ENCODE measurements at regions of chr20 and their contacts with region 1.

Region 1: GRCh38 chr20:62121776-62122631 is at the start of gene LSM14B:
- DNase-seq: peak; percentile 99
- CTCF ChIP-seq: no peak

Region 2: DNA sequence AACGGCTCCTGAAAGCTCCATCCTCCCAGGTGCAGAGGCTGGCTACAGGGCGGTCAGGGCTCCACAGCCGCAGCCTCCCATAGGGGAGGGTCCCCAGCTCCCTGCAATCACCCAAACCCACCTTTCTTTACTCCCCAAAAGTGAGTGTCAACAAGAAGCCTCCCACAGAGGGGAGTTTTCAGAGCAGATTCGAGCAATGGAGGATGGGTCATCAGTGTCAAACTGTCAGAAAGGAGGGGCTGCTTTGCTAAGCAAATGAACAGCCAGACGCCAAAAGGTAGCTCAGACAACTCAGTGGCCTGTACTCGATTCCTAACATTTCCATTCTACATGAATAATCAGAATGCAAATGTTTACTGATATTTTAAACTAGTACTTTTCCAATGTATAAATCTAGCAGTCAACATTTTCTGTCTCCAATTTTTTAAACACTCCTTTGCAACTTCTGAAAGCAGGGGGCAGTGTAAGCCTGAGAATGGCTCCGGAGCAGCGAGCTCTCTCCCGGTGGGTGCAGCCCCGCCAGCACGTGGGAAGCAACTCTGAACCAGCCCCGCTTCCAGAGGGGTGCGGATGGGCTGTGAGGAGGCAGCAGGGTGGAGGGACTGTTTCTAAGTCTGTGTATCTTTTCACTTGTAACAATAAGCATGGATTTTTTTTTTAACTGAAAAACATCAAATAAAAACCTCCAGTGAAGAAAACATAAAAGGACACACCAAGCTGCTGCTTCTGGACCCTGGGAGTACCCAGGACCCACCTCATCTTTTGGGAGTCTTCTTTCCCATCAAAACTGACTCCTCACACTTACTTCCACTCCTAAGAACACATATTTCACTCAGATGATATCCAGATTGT is 111.2 kb before region 1 on chr20:
- CTCF ChIA-PET with region 1: interaction called, 19 read pairs
- POLR2A ChIA-PET with region 1: no interaction called
- DNase-seq: peak; percentile 80
- CTCF ChIP-seq: peak; percentile 67

Region 3: DNA sequence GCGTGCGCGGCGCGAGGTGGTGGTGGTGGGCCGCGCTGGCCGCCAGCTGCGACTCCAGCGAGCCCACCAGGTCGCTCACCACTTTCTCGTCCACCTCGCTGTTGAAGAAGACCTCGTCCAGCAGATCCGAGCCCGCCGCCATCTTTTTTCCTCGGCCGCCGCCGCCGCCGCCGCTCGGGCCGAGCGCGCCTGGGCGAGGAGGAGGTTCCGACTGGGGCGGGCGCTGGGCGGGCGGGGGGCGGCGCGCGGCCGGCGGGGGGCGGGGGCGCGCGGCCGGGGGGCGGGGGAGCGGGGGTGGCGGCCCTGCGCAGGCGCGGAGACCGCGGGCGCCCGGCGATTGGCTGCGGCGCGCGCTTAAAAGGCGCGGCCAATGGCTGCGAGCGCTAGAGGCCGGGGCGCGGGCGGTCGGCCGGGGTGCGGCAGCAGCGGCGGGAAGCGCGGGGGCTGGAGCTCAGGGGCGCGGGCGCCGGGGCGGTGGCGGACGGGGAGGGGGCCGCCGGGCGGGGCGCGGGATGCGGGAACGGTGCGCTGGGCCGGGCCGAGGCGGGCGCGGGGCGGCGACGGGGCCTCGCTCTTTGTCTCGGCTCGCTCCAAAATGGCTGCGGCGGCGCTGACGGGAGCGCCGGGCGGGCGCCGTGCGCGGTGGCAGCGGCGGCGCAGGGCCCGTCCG is 56.2 kb before region 1 on chr20 and contains the start of gene TAF4:
- CTCF ChIA-PET with region 1: no interaction called
- POLR2A ChIA-PET with region 1: interaction called, 36 read pairs
- DNase-seq: peak; percentile 99
- CTCF ChIP-seq: no peak

Region 4: GRCh38 chr20:62079166-62079565 is 42.8 kb before region 1 on chr20:
- CTCF ChIA-PET with region 1: no interaction called
- POLR2A ChIA-PET with region 1: no interaction called
- DNase-seq: no peak
- CTCF ChIP-seq: no peak

Region 5: GRCh38 chr20:62136283-62137091 is 14.5 kb after region 1 on chr20:
- CTCF ChIA-PET with region 1: interaction called, 16 read pairs
- POLR2A ChIA-PET with region 1: interaction called, 5 read pairs
- DNase-seq: peak; percentile 64
- CTCF ChIP-seq: peak; percentile 94

Region 6: DNA sequence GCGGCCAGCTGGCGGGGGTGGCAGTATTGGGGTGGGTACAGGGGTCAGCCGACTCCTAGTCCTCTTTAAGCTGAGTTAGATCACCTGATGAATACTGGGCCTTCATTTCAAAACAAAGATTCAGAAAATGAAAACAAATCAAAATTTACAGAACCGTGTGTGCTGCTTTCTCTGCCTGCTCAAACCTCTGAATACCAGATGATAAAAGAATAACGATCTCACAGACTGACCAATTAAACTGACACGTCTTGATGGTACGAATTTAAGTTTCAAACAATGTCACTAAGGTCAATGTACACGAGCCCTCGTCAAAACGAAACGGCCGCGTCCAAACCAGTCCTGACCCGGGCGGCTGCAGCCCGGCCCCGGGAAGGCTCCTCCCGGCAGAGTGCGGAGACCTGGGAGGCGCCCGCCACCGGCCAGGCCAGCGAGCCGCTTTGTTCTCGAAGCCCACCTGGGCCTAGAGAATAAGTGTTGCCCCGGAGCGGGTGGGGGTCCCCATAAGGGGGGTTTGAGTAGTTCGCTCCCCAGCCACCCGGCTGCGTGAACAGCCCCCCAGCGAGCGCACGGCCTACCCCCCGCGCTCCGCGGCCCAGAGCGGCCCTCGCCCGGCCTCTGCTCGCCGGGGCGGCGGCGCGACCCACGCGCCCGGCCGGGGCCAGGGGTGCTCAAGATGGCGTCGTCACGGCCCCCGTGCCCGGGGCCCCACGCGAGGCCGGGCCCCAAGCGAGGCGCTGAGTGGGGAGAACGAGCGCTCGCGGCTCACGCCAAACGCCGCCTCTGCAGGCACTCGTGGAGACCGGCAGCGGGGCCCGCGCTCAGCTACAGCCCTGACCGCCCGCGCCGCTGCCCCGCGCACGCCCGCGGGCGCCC is 20.5 kb after region 1 on chr20:
- CTCF ChIA-PET with region 1: interaction called, 16 read pairs
- POLR2A ChIA-PET with region 1: interaction called, 3 read pairs
- DNase-seq: no peak
- CTCF ChIP-seq: no peak

Region 7: GRCh38 chr20:62237801-62238571 is 116.0 kb after region 1 on chr20 and contains the start of gene OSBPL2:
- CTCF ChIA-PET with region 1: no interaction called
- POLR2A ChIA-PET with region 1: no interaction called
- DNase-seq: peak; percentile 100
- CTCF ChIP-seq: no peak